ENCODE measurements at regions of chr12 and their contacts with region 1.

Region 1: DNA sequence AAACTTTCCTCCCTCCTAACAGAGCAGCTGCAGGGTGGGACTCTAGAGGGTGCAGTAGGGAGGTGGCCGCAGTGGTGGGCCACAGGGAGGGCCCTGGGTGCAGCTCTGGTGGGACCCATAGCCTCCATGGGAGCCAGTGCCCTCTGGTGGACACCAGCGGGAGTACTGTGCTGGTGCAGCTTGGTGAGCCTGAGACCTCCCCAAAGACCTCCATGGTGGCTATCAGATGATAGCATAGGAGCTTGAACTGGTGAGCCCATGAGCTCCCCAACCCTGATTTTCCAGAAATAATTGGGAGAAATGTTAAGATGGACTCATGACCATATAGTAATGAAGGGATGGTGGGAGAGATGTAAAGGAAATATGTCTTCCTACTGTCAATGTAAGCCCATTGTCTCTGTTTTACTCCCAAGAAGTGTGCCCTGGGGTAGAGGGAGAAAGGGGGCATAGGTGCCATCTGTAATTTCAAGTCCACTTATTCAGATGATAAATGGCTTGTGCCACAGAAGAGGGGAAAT is 98.7 kb downstream of the GAS2L3 start:
- DNase-seq: peak; percentile 45
- CTCF ChIP-seq: peak; percentile 60

Region 2: GRCh38 chr12:100348657-100349454 is 323.3 kb before region 1 on chr12:
- CTCF ChIA-PET with region 1: interaction called, 30 read pairs
- POLR2A ChIA-PET with region 1: no interaction called
- DNase-seq: peak; percentile 19
- CTCF ChIP-seq: peak; percentile 33

Region 3: DNA sequence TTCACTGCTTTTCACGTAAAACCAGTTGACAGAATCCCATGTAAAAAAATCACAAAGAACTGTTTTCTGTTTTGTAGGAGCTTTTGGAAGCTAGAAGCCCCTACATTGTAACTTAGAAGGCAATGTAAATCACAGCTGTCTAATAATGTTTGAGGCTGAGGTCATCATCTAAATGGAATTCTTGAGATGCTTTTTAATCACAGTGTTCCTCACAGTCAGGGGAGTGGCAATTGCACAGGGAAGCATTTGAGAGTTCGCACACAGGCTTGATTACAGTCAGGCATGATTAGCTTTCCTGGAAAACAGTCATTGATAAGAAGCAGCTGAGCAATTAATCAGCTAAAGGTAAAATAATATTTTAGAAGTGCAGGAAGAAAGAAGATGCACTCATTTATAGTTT is 312.3 kb before region 1 on chr12:
- CTCF ChIA-PET with region 1: no interaction called
- POLR2A ChIA-PET with region 1: no interaction called
- DNase-seq: no peak
- CTCF ChIP-seq: no peak

Region 4: DNA sequence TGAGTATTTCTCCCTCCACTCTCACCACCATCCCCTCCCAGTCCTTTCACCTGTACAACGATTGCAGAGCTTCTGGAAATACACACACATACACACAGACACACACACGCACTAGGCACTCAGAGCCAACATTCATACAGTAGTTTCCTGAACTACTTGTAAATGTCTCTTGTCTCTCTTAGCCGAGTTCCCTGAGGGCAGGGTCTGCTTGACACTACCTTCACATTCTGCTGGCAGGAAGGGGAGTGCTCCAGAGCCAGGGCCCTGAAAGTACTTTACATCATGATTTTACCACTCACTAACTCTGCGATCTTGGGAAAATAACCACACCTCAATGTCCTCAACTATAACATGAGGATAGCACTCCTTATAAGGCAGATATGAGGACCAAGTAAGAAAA is 16.0 kb before region 1 on chr12:
- CTCF ChIA-PET with region 1: interaction called, 37 read pairs
- POLR2A ChIA-PET with region 1: no interaction called
- DNase-seq: no peak
- CTCF ChIP-seq: no peak

Region 5: GRCh38 chr12:100682178-100682577 is 10.0 kb after region 1 on chr12:
- CTCF ChIA-PET with region 1: interaction called, 35 read pairs
- POLR2A ChIA-PET with region 1: no interaction called
- DNase-seq: no peak
- CTCF ChIP-seq: no peak

Region 6: GRCh38 chr12:100706033-100706432 is 33.9 kb after region 1 on chr12:
- CTCF ChIA-PET with region 1: interaction called, 16 read pairs
- POLR2A ChIA-PET with region 1: no interaction called
- DNase-seq: no peak
- CTCF ChIP-seq: no peak

Region 7: DNA sequence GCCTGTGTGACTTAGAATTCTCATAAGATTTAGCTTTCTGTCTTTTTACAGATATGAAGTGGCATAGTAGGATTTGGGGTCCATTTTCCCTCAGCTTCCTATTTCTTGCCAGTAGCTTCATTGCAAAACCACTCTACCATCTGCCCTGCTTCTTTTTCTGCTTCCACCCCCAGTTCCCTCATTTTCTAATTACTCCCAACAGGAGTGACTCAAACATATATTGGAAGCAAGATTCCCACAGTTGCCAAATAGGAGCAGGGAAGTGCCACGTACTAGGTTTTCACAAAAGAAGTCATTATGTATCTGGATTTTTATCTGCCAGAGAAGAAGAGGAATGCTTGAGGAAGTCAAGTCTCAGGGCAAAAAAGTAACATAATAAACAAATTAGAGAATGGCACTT is 186.5 kb after region 1 on chr12:
- CTCF ChIA-PET with region 1: no interaction called
- POLR2A ChIA-PET with region 1: no interaction called
- DNase-seq: no peak
- CTCF ChIP-seq: no peak

Measured in GM10248 (cell line).